Dorsolateral prefrontal cortex (tissue), 120 donors: ENCODE measurements at regions of chr19 and their contacts with region 1.

Region 1: DNA sequence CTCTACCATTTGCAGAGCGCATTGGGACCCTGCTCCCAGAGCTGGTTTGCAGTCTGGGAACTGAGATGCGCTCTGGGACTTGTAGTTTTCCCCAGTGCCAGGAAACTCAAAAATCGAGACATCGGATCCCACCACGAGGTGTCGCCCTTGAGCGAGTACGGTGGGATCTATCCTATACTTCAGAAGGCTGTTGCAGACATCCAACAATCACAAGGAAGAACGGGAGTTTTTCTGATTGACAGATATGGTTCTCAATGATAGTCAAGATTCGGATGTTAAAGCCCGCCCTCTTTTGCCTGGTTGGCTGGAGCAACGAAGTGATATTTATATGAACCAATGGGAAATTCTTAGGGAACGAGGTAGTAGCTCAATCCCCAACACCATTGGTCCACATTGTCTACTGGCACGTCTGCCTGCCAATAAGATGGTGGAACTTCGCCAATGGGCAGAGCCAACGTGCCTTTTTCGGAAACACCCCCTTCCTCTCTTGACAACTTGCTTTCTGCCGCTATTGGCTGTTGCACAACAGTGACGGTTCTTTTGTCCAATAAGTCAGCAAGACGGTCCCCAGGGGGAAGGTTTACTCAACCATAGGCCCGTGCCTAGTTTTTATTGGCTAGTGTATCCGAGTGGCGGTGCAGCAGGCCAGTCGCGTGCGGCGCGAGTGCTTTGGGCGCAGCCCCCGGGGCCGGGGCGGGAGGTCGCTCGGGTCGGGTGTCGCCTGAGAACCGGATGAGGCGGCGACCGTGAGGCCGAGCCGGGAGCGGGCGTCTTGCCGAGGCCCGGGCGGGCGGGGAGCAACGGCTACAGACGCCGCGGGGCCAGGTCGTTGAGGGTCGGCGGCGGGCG is at the start of gene DNM2:
- DNase-seq: peak; percentile 97 to 100 (median 99)
- H3K4me3 ChIP-seq: peak within 1 kb of the TSS; percentile 60 to 100 (median 96)
- H3K27ac ChIP-seq: peak within 1 kb of the TSS; percentile 37 to 97 (median 92)
- H3K27me3 ChIP-seq: no peaks in the 10 kb centered on the region
- CTCF ChIP-seq: peak; percentile 84 to 99 (median 94)
- total RNA-seq, gene DNM2: 88.3 to 281 (median 146) TPM

Region 2: DNA sequence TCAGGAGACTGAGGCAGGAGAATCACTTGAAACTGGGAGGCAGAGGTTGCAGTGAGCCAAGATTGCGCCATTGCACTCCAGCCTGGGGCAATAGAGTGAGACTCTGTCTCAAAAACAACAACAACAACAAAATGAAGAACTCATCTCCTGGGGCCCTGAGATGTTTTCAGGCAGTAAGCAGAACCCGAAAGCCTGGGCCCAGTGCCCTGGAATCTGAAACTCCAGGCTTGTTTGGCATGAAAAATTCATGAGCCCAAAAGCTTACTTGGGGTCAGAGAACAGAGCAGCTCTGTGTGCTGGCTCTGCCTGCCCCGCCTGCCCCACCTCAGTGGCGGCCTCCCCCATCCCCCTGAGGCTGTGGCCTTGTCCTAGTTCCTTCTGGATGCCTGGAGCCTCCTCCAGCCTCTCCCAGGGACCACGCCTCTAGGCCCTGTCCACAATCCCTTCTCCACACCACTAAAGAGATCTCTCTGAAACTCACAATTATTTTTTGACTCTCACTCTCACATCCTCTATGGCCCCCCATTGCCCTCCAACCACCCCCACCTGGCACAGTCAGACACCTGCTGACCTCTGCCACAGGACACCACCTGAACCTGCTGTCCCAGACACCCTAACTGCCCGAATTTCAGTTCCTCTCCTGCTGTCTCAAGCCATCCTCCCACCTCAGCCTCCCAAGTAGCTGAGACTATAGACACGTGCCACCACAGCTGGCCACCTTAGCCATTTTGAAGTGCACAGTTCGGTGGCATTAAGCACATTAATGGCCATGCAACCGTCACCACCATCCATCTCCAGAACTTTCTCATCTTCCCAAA is 123.6 kb before region 1 on chr19:
- intact Hi-C with region 1: no loop called
- DNase-seq: peak in 8 of 10 donors; percentile 14 to 63 (median 58)
- H3K4me3 ChIP-seq: no peak overlapping the region
- H3K27ac ChIP-seq: peak overlapping the region in 55 of 59 donors; percentile 21 to 84 (median 67)
- H3K27me3 ChIP-seq: peaks cover 0 to 7% (median 0%) of the 10 kb centered on the region in 45 donors
- CTCF ChIP-seq: no peak

Region 3: GRCh38 chr19:10751109-10751953 is 33.8 kb after region 1 on chr19:
- intact Hi-C with region 1: loop called in 1 of 2 experiments (anchors 5 kb)
- DNase-seq: no peak
- H3K4me3 ChIP-seq: peak overlapping the region in 4 of 59 donors; percentile 1 to 35 (median 17)
- H3K27ac ChIP-seq: peak overlapping the region; percentile 84 to 100 (median 97)
- H3K27me3 ChIP-seq: no peaks in the 10 kb centered on the region
- CTCF ChIP-seq: no peak

Region 4: GRCh38 chr19:10769533-10770491 is 52.2 kb after region 1 on chr19:
- intact Hi-C with region 1: loop called (anchors 1 kb)
- DNase-seq: peak; percentile 59 to 78 (median 67)
- H3K4me3 ChIP-seq: peak overlapping the region in 21 of 59 donors; percentile 1 to 40 (median 18)
- H3K27ac ChIP-seq: peak overlapping the region; percentile 60 to 97 (median 92)
- H3K27me3 ChIP-seq: no peaks in the 10 kb centered on the region
- CTCF ChIP-seq: peak in 49 of 56 donors; percentile 6 to 73 (median 46)

Region 5: GRCh38 chr19:10829967-10830366 is 112.4 kb after region 1 on chr19:
- intact Hi-C with region 1: loop called (anchors 5 kb)
- DNase-seq: no peak
- H3K4me3 ChIP-seq: no peak overlapping the region
- H3K27ac ChIP-seq: peak overlapping the region in 7 of 59 donors; percentile 6 to 40 (median 18)
- H3K27me3 ChIP-seq: no peaks in the 10 kb centered on the region
- CTCF ChIP-seq: no peak

Region 6: DNA sequence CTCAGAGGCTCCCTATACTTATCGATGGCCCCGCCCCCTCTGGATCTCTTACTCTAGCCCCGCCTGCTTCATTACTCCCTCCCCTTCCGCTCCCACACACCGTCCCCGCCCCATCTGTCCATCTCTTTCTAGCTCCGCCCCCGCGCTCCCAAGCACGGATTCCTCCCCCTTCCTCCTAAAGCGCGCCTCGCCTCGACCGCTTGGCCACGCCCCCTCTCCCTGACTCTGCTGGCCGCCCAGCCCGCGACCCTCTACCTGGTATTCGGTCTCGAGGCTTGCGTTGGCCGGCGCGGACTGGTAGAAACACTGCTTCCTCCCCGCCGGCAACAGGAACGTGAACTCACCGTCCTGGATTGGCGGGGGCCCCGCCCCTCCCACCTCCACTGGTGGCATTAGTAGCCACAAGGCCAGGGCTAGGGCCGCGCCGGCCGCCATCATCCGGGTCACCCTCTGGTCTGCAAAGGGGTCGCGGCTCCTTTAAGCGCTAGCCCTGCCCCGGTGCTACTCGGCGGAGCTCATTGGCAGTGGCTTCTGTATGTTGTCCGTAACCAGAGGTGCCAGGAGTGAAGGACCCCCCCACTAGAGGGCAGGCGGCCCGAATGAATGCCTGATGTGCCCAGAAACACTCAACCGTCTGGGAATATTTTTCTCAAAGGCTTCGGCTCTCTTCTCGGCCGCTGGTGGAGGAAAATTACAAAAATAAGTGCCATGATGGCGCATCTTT is 118.3 kb after region 1 on chr19 and contains the start of gene TMED1:
- intact Hi-C with region 1: loop called (anchors 5 kb)
- DNase-seq: peak; percentile 94 to 100 (median 99)
- H3K4me3 ChIP-seq: peak within 1 kb of the TSS; percentile 58 to 97 (median 83)
- H3K27ac ChIP-seq: peak within 1 kb of the TSS; percentile 88 to 100 (median 99)
- H3K27me3 ChIP-seq: no peaks in the 10 kb centered on the region
- CTCF ChIP-seq: peak in 53 of 56 donors; percentile 27 to 77 (median 49)
- total RNA-seq, gene TMED1: 7.7 to 25.1 (median 13.0) TPM

Region 7: DNA sequence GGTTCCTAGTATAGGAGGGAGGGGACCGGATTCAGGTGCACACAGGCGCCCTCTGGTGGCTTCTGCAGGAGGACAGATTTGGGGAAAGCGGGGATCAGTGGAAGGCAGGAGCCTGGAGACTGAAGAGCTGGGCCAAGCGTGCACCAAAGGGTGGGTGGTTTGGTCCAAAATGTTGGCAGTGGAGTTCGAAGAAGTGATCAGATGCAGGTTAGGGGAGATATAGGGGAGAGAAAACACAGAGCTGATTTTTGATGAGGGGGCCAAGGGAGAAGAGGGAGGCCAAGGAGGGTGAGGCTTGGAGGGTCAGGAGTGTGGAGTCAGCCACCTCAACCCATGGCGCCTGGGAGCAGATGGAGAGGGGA is 146.9 kb after region 1 on chr19:
- intact Hi-C with region 1: loop called (anchors 5 to 10 kb)
- DNase-seq: peak; percentile 71 to 92 (median 84)
- H3K4me3 ChIP-seq: peak overlapping the region in 8 of 59 donors; percentile 11 to 44 (median 28)
- H3K27ac ChIP-seq: peak overlapping the region in 34 of 59 donors; percentile 12 to 59 (median 35)
- H3K27me3 ChIP-seq: no peaks in the 10 kb centered on the region
- CTCF ChIP-seq: peak; percentile 71 to 93 (median 87)

Region 8: DNA sequence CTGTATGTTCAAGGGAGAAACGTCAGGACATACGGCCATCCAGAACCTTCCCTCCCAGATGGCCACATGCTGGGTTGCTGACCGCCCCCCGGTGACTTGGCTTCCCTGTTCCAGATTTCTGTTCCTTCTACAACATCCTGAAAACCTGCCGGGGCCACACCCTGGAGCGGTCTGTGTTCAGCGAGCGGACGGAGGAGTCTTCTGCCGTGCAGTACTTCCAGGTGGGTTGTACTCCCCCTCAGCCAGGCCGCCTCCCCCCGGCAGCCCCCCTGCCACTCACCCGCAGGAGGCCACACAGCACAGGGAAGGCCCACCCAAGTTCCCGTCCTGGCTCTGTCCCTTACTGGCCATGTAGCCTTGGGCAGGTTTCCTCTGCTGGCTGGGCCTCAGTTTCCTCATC is 190.3 kb after region 1 on chr19:
- intact Hi-C with region 1: no loop called
- DNase-seq: no peak
- H3K4me3 ChIP-seq: no peak overlapping the region
- H3K27ac ChIP-seq: no peak overlapping the region
- H3K27me3 ChIP-seq: no peaks in the 10 kb centered on the region
- CTCF ChIP-seq: no peak